Activated CD4-positive, alpha-beta T cell treated with anti-CD3 and anti-CD28 coated beads for 36 hours (primary cell): ENCODE measurements at regions of chr15 and their contacts with region 1.

Region 1: GRCh38 chr15:31458591-31459399 is 132.2 kb downstream of the KLF13 start:
- DNase-seq: peak; percentile 83
- ATAC-seq: peak; percentile 93
- H3K4me3 Mint-ChIP-seq: peak overlapping the region; percentile 70
- H3K27ac Mint-ChIP-seq: peak overlapping the region; percentile 92
- H3K4me1 Mint-ChIP-seq: peaks cover 45% of the 10 kb centered on the region
- H3K27me3 Mint-ChIP-seq: no peaks in the 10 kb centered on the region

Region 2: DNA sequence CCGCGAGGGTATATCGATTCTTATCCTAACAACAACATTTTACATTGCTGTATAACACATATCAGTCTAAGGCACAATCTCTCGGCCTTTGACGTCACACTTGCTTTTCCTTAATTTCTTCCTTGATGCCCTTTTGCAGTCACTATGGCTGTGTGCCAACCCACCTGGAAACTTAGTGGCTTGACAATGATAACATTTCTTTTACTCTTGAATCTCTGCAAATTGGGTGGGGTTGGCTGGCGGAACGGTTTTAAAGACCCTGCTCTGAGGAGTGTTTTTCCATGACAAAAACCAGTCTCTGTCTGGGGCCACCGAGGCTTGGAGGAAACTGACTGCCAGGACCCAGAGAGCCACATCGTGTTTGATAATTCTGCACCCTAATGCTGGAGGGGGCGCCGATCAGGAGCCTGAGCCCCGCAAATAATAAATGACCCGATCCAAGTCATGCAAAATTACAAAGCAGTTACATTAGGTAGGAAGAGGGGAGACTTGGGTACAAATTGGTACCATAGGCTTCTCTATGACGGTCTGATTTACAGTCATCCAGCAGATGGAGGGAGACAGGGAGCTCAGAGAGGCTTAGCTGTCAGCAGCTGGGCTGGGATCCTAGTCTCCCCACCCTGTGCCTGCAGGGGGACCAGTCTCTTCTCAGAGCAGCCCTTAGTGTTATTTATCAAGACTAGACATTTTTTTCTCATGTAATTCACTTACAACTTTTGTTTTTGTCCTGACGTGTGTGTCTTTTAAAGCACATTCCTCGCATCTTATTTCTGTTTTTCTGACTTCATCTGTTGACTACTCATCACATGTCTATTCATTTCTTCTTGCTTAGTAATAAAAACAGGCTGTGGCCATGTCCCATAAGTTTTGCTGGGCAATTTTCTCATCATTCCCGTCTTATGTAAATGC is 16.3 kb before region 1 on chr15:
- CTCF ChIA-PET with region 1: interaction called, 16 read pairs
- POLR2A ChIA-PET with region 1: interaction called, 7 read pairs
- intact Hi-C with region 1: loop called (anchors 1 to 2 kb)
- DNase-seq: peak; percentile 38
- ATAC-seq: no peak
- H3K4me3 Mint-ChIP-seq: peak overlapping the region; percentile 8
- H3K27ac Mint-ChIP-seq: peak overlapping the region; percentile 4
- H3K4me1 Mint-ChIP-seq: peaks cover 58% of the 10 kb centered on the region
- H3K27me3 Mint-ChIP-seq: peaks cover 2% of the 10 kb centered on the region

Region 3: DNA sequence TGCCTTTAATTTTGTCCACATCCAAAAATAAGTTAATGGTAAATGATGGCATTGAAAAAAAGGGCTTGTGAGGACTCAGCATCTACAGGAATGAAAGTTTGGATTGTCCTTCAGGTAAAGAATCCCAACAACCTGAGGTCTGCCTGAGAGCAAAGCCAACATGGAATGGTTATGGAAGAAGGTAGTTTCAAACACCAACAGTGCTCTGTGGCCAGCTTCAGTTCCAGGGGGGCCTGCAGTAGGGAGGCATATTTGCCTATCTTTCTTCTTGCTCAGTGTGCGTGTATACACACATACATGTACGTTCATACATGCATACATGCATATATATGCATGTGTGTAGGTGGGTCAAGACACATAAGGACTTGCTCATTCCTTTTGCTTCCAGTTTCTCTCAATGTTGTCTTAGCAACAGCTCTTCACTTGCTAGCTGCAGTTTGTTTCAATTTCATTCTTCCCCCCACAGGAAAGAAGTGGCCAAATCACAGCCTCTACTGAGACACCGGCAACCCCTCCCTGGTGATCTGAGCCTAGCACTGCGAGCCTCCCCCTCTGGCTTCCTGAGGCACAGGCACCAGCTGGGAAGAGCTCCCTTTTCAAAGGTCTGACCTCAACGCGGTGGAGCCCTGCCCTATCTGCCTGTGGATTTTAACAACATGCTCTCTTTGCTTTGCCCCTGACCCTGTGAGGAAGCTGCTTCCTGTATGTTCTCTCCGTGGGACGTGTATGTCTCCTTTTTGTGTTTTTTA is 14.0 kb after region 1 on chr15:
- CTCF ChIA-PET with region 1: interaction called, 15 read pairs
- POLR2A ChIA-PET with region 1: interaction called, 6 read pairs
- intact Hi-C with region 1: loop called (anchors 1 kb)
- DNase-seq: peak; percentile 74
- ATAC-seq: peak; percentile 93
- H3K4me3 Mint-ChIP-seq: peak overlapping the region; percentile 70
- H3K27ac Mint-ChIP-seq: peak overlapping the region; percentile 95
- H3K4me1 Mint-ChIP-seq: peaks cover 41% of the 10 kb centered on the region
- H3K27me3 Mint-ChIP-seq: no peaks in the 10 kb centered on the region